SK-N-SH (cell line): ENCODE measurements at regions of chr2 and their contacts with region 1.

Region 1: GRCh38 chr2:121076885-121077549 is 208.0 kb downstream of the TFCP2L1 start:
- DNase-seq: peak; percentile 67
- H3K4me3 ChIP-seq: no peak overlapping the region
- H3K27ac ChIP-seq: no peak overlapping the region
- H3K4me1 ChIP-seq: peaks cover 0 to 19% of the 10 kb centered on the region in 2 experiments; a peak in 1 of 4 replicates
- H3K27me3 ChIP-seq: no peaks in the 10 kb centered on the region
- CTCF ChIP-seq: peak; percentile 78
- EP300 ChIP-seq: no peak
- RAD21 ChIP-seq: no peak

Region 2: DNA sequence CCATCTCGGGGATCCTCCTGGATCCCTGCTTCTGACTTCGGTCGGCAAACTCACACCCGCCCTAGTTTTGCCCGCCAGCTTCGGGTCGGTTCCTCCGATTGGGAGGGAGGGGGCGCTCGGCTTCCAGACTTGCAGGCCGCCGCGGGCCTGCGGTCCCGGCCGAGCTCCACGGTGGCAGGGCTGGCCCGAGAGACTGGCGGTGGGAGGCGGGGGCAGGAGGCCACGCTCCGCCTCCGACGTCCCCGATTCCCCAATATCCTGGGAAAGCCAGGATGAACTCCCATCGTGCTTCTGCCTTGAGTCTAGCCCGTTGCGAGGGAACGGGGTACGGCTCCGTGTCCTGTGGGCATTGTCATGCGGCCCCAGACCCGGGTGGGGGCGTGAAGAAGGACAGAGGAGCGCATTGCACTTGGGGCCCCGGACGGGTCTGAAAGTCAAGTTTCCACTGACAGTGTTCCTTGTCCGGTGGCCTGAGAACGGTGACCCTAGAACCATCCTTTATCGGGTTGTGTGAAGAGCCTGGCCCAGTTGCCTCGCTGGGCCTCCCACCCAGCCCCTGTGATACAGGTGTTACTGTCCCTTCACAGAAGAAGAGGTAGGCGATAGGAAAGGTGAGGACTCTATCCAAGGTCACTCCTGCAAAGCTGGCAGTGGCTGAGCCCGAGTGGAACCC is 733.4 kb before region 1 on chr2:
- CTCF ChIA-PET with region 1: interaction called, 17 read pairs
- POLR2A ChIA-PET with region 1: no interaction called
- DNase-seq: peak; percentile 92
- H3K4me3 ChIP-seq: peak overlapping the region in 1 of 2 experiments; percentile 46; a peak in 2 of 4 replicates
- H3K27ac ChIP-seq: no peak overlapping the region
- H3K4me1 ChIP-seq: peaks cover 0 to 14% of the 10 kb centered on the region in 2 experiments; a peak in 1 of 4 replicates
- H3K27me3 ChIP-seq: peaks cover 64% of the 10 kb centered on the region
- CTCF ChIP-seq: peak; percentile 70
- EP300 ChIP-seq: no peak
- RAD21 ChIP-seq: peak; percentile 88

Region 3: GRCh38 chr2:120703330-120703994 is 373.6 kb before region 1 on chr2:
- CTCF ChIA-PET with region 1: interaction called, 408 read pairs
- POLR2A ChIA-PET with region 1: no interaction called
- DNase-seq: no peak
- H3K4me3 ChIP-seq: no peak overlapping the region
- H3K27ac ChIP-seq: no peak overlapping the region
- H3K4me1 ChIP-seq: peaks cover 0 to 18% of the 10 kb centered on the region in 2 experiments; a peak in 1 of 4 replicates
- H3K27me3 ChIP-seq: no peaks in the 10 kb centered on the region
- CTCF ChIP-seq: no peak
- EP300 ChIP-seq: no peak
- RAD21 ChIP-seq: no peak

Region 4: DNA sequence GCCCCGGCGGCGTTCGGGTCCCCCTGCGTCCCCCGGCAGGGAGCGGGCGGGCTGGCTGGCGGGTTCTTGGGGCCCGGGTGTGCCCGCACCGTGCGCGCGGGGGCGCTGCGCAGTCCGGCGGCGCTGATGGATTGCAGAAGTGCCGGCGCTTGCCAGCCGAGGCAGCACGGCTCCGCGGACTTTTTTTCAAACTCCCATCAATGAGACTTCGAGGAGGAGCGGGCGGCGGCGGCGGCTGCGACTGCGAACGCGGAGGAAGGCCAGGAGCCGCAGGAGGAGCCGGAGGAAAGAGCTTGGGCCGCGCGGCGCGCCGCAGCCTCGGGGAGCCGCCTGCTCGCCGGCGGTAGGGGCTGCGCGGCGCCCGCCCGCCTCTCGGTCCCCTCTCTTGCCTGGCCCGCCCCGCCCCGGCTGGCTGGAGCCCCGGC is 341.3 kb before region 1 on chr2 and contains the start of gene GLI2:
- CTCF ChIA-PET with region 1: interaction called, 18 read pairs
- POLR2A ChIA-PET with region 1: no interaction called
- DNase-seq: peak; percentile 92
- H3K4me3 ChIP-seq: peak within 1 kb of the TSS; percentile 80 to 88
- H3K27ac ChIP-seq: peak within 1 kb of the TSS; percentile 74 to 81
- H3K4me1 ChIP-seq: peaks cover 11 to 22% of the 10 kb centered on the region in 2 experiments; a peak in 3 of 4 replicates
- H3K27me3 ChIP-seq: no peaks in the 10 kb centered on the region
- CTCF ChIP-seq: peak; percentile 78
- EP300 ChIP-seq: no peak
- RAD21 ChIP-seq: peak; percentile 66
- polyA plus RNA-seq, gene GLI2: 2.0 and 3.4 TPM in 2 replicates

Region 5: GRCh38 chr2:121058852-121059558 is 18.0 kb before region 1 on chr2:
- CTCF ChIA-PET with region 1: interaction called, 31 read pairs
- POLR2A ChIA-PET with region 1: no interaction called
- DNase-seq: peak; percentile 93
- H3K4me3 ChIP-seq: no peak overlapping the region
- H3K27ac ChIP-seq: no peak overlapping the region
- H3K4me1 ChIP-seq: peaks cover 0 to 26% of the 10 kb centered on the region in 2 experiments; a peak in 2 of 4 replicates
- H3K27me3 ChIP-seq: peaks cover 25% of the 10 kb centered on the region; the same call in 1 of the 2 replicates
- CTCF ChIP-seq: no peak
- EP300 ChIP-seq: peak in 1 of 2 experiments; percentile 82; a peak in 2 of 4 replicates
- RAD21 ChIP-seq: no peak

Region 6: DNA sequence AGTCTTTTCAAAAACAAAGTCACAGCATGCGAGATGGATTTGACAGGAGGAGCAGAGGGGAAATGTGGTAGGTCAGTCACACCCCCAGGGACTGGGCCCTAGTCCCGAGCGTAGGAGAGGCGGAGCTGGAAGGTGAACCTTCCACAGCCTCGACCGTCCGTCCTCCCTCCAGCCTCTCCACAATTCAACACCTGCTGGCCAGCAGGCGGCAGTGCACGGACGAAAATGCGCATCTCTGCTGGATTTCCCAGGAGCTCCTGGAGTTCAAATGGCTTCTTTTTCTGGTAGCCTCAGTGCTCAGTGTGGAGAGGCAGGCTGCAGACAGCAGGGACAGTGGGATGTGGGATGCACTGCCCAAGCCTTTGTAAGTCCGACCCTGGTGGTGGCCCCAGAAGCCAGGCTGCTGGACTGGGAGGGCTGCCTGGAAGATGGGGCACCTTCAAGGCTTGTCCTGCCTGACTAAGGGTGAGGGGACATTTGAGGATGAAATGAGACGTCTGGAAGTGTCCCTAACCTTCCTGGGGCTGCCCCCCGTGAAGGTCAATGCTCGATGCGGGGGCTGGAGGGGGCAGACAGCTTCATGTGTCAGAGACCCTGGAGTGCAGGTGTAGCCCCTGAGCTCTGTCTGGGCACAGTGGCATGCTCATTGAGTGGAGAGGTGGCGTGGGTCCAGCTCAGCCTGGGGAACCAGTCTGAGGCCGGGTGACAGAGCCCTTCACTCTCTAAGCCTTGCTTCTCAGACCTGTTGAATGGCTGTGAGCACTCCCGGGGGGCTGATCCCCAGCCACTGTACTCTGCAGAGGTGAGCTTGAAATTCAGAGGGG is 18.5 kb after region 1 on chr2:
- CTCF ChIA-PET with region 1: interaction called, 20 read pairs
- POLR2A ChIA-PET with region 1: no interaction called
- DNase-seq: peak; percentile 85
- H3K4me3 ChIP-seq: no peak overlapping the region
- H3K27ac ChIP-seq: no peak overlapping the region
- H3K4me1 ChIP-seq: peaks cover 0 to 8% of the 10 kb centered on the region in 2 experiments; a peak in 2 of 4 replicates
- H3K27me3 ChIP-seq: peaks cover 15% of the 10 kb centered on the region
- CTCF ChIP-seq: peak; percentile 67
- EP300 ChIP-seq: no peak
- RAD21 ChIP-seq: peak; percentile 84

Region 7: DNA sequence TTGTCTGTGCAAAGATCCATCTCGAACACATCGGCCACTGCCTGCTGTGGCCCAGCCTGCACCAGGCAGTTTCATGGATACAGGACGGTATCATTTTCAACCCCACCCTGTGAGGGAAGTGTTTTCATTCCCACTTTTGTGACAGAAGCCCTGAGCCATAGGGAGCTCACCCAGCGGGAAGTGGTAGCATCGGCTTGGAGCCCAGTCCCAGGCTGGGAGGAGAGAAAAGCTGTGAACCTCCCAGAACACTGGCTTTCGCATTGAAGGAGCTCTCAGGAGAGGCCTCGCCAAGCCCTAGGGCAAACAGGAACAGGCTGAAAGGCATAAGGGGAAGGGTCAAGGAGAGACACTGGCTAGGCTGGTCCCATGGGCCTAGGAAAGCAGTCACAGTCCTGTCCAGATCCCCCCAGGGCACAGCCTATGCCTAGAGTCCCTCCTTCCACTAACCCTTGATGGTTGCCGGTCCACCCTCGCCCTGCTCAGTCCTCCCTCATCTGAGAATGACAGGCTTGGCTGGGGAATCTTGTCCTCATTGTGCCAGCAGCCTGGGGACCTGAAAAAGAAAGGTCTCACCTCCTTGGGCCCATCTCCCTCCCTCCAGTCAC is 42.0 kb after region 1 on chr2:
- CTCF ChIA-PET with region 1: no interaction called
- POLR2A ChIA-PET with region 1: no interaction called
- DNase-seq: no peak
- H3K4me3 ChIP-seq: no peak overlapping the region
- H3K27ac ChIP-seq: no peak overlapping the region
- H3K4me1 ChIP-seq: no peaks in the 10 kb centered on the region
- H3K27me3 ChIP-seq: peaks cover 16% of the 10 kb centered on the region
- CTCF ChIP-seq: no peak
- EP300 ChIP-seq: no peak
- RAD21 ChIP-seq: no peak